Panc1 (cell line): ENCODE measurements at regions of chr4 and their contacts with region 1.

Region 1: GRCh38 chr4:10413177-10413576 is 44.0 kb downstream of the ZNF518B start:
- DNase-seq: no peak
- ATAC-seq: no peak
- H3K4me3 ChIP-seq: no peak overlapping the region
- H3K27ac ChIP-seq: no peak overlapping the region
- H3K4me1 ChIP-seq: no peaks in the 10 kb centered on the region
- H3K27me3 ChIP-seq: no peaks in the 10 kb centered on the region
- CTCF ChIP-seq: no peak

Region 2: GRCh38 chr4:10530137-10530786 is 117.1 kb after region 1 on chr4:
- CTCF ChIA-PET with region 1: no interaction called
- POLR2A ChIA-PET with region 1: no interaction called
- in situ Hi-C with region 1: no loop called
- intact Hi-C with region 1: loop called (anchors 10 kb)
- DNase-seq: no peak
- ATAC-seq: no peak
- H3K4me3 ChIP-seq: no peak overlapping the region
- H3K27ac ChIP-seq: no peak overlapping the region
- H3K4me1 ChIP-seq: no peaks in the 10 kb centered on the region
- H3K27me3 ChIP-seq: no peaks in the 10 kb centered on the region
- CTCF ChIP-seq: no peak